ENCODE measurements at regions of chr19 and their contacts with region 1.

Region 1: GRCh38 chr19:45584332-45585157 is at the start of gene OPA3:
- DNase-seq: peak; percentile 100
- H3K4me3 ChIP-seq: peak within 1 kb of the TSS; percentile 53
- CTCF ChIP-seq: no peak
- POLR2A ChIP-seq: peak in 1 of 2 donors; percentile 70
- total RNA-seq, gene OPA3: 4.4 to 15.7 (median 12.7) TPM

Region 2: DNA sequence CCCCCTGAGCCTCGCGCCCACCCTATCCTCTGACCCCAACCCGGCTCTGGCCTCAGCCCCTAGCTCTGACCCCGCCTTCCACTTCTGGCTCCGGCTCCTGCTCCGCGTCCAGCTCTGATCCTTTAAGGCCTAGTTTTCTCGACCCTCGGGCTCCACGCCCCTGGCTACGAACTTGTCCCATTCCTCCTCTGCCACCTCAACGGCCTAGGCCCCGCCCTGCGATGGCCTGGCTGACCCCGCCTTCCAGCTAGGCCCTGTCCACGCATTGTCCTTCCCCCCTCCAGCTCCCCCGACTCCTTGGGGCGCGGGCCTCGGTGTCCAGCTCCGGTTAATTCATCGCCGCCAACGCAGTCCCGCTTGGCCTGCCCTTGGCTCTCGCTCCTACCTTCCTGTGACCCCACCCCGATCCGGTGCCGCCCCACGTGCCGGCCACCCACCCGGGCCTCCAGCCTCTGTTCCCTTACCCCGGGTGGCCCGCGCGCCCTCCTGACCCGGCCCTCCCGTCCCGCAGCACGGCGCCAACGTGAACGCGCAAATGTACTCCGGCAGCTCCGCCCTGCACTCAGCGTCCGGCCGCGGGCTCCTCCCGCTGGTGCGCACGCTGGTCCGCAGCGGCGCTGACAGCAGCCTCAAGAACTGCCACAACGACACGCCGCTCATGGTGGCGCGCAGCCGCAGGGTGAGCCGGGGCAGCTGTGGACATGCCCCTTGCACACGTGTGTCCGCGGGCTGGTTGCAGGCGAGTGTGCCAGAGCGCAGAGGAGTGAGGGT is 826.6 kb before region 1 on chr19:
- intact Hi-C with region 1: loop called (anchors 5 kb)
- DNase-seq: no peak
- H3K4me3 ChIP-seq: no peak overlapping the region
- CTCF ChIP-seq: no peak
- POLR2A ChIP-seq: no peak